A673 (cell line): ENCODE measurements at regions of chr21 and their contacts with region 1.

Region 1: GRCh38 chr21:40120940-40121575 is 253.8 kb downstream of the PCP4 start:
- DNase-seq: no peak
- H3K4me3 ChIP-seq: no peak overlapping the region
- H3K27ac ChIP-seq: no peak overlapping the region
- H3K4me1 ChIP-seq: no peaks in the 10 kb centered on the region
- H3K27me3 ChIP-seq: no peaks in the 10 kb centered on the region
- CTCF ChIP-seq: peak; percentile 65

Region 2: GRCh38 chr21:39523399-39523798 is 597.7 kb before region 1 on chr21:
- CTCF ChIA-PET with region 1: no interaction called
- POLR2A ChIA-PET with region 1: no interaction called
- intact Hi-C with region 1: loop called (anchors 5 kb)
- DNase-seq: no peak
- H3K4me3 ChIP-seq: no peak overlapping the region
- H3K27ac ChIP-seq: no peak overlapping the region
- H3K4me1 ChIP-seq: no peaks in the 10 kb centered on the region
- H3K27me3 ChIP-seq: no peaks in the 10 kb centered on the region
- CTCF ChIP-seq: no peak

Region 3: DNA sequence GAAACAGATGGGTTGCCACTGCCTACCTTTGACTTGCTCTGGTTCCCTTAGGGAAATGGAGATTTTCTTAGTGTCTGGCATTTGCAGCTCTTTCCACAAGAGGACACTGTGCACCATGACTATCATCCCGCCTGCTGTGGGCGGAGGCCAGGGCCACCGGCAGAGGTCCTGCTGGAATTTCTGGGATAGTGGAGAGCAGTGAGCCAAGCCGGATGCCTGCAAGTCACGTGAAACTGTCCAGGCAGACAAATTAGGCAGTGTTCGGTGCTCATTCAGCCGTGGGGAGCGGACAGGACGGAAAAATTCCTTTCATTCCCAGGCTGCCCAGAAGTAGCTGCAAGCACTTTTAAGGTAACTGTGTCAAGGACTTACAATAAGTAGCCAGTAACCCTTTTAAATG is 332.7 kb before region 1 on chr21:
- CTCF ChIA-PET with region 1: no interaction called
- POLR2A ChIA-PET with region 1: no interaction called
- intact Hi-C with region 1: loop called (anchors 2 kb)
- DNase-seq: peak; percentile 43
- H3K4me3 ChIP-seq: no peak overlapping the region
- H3K27ac ChIP-seq: no peak overlapping the region
- H3K4me1 ChIP-seq: no peaks in the 10 kb centered on the region
- H3K27me3 ChIP-seq: no peaks in the 10 kb centered on the region
- CTCF ChIP-seq: peak; percentile 54

Region 4: GRCh38 chr21:39867198-39867650 is 253.8 kb before region 1 on chr21 and contains the start of gene PCP4:
- CTCF ChIA-PET with region 1: no interaction called
- POLR2A ChIA-PET with region 1: no interaction called
- intact Hi-C with region 1: loop called (anchors 5 kb)
- DNase-seq: peak; percentile 44
- H3K4me3 ChIP-seq: no peak within 1 kb of the TSS
- H3K27ac ChIP-seq: no peak within 1 kb of the TSS
- H3K4me1 ChIP-seq: no peaks in the 10 kb centered on the region
- H3K27me3 ChIP-seq: peaks cover 8% of the 10 kb centered on the region
- CTCF ChIP-seq: peak; percentile 90
- total RNA-seq, gene PCP4: not detected in 2 replicates

Region 5: GRCh38 chr21:40160911-40161310 is 39.9 kb after region 1 on chr21:
- CTCF ChIA-PET with region 1: no interaction called
- POLR2A ChIA-PET with region 1: no interaction called
- intact Hi-C with region 1: no loop called
- DNase-seq: no peak
- H3K4me3 ChIP-seq: no peak overlapping the region
- H3K27ac ChIP-seq: no peak overlapping the region
- H3K4me1 ChIP-seq: no peaks in the 10 kb centered on the region
- H3K27me3 ChIP-seq: no peaks in the 10 kb centered on the region
- CTCF ChIP-seq: no peak

Region 6: GRCh38 chr21:40270047-40270446 is 149.0 kb after region 1 on chr21:
- CTCF ChIA-PET with region 1: no interaction called
- POLR2A ChIA-PET with region 1: no interaction called
- intact Hi-C with region 1: no loop called
- DNase-seq: no peak
- H3K4me3 ChIP-seq: no peak overlapping the region
- H3K27ac ChIP-seq: no peak overlapping the region
- H3K4me1 ChIP-seq: no peaks in the 10 kb centered on the region
- H3K27me3 ChIP-seq: no peaks in the 10 kb centered on the region
- CTCF ChIP-seq: no peak

Region 7: GRCh38 chr21:40393066-40393465 is 272.0 kb after region 1 on chr21:
- CTCF ChIA-PET with region 1: no interaction called
- POLR2A ChIA-PET with region 1: no interaction called
- intact Hi-C with region 1: no loop called
- DNase-seq: no peak
- H3K4me3 ChIP-seq: no peak overlapping the region
- H3K27ac ChIP-seq: no peak overlapping the region
- H3K4me1 ChIP-seq: no peaks in the 10 kb centered on the region
- H3K27me3 ChIP-seq: no peaks in the 10 kb centered on the region
- CTCF ChIP-seq: no peak

Region 8: DNA sequence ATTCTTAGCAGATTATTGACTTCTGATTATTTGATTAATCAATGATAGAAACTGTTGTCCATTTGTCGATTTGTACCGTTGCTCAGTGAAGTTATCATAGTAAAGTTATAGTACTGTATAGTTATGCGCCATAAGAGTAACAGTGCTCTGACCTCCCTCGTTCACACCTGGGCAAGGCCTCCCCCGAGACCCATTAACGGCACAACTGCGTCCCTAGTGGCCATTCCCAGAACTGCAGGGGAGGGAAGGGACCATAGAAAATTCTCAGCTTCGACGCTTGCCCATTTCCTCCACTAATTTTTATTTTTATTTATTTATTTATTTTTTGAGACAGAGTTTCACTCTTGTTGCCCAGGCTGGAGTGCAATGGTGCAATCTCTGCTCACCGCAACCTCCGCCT is 391.5 kb after region 1 on chr21:
- CTCF ChIA-PET with region 1: no interaction called
- POLR2A ChIA-PET with region 1: no interaction called
- intact Hi-C with region 1: no loop called
- DNase-seq: no peak
- H3K4me3 ChIP-seq: no peak overlapping the region
- H3K27ac ChIP-seq: no peak overlapping the region
- H3K4me1 ChIP-seq: no peaks in the 10 kb centered on the region
- H3K27me3 ChIP-seq: no peaks in the 10 kb centered on the region
- CTCF ChIP-seq: peak; percentile 47; the same call in 1 of the 2 replicates